ENCODE measurements at regions of chr14 and their contacts with region 1.

Region 1: GRCh38 chr14:21039585-21040369 is 2.4 kb upstream of the RNASE7 start:
- H3K4me3 ChIP-seq: no peak overlapping the region
- H3K27ac ChIP-seq: no peak overlapping the region
- H3K4me1 ChIP-seq: no peaks in the 10 kb centered on the region
- CTCF ChIP-seq: peak; percentile 67

Region 2: GRCh38 chr14:20697273-20698017 is 342.3 kb before region 1 on chr14:
- CTCF ChIA-PET with region 1: interaction called, 13 read pairs
- POLR2A ChIA-PET with region 1: no interaction called
- H3K4me3 ChIP-seq: no peak overlapping the region
- H3K27ac ChIP-seq: no peak overlapping the region
- H3K4me1 ChIP-seq: no peaks in the 10 kb centered on the region
- CTCF ChIP-seq: peak; percentile 76

Region 3: GRCh38 chr14:21063479-21063878 is 23.7 kb after region 1 on chr14:
- CTCF ChIA-PET with region 1: interaction called, 25 read pairs
- POLR2A ChIA-PET with region 1: no interaction called
- H3K4me3 ChIP-seq: no peak overlapping the region
- H3K27ac ChIP-seq: no peak overlapping the region
- H3K4me1 ChIP-seq: no peaks in the 10 kb centered on the region; the same call in 1 of the 2 replicates
- CTCF ChIP-seq: no peak

Region 4: DNA sequence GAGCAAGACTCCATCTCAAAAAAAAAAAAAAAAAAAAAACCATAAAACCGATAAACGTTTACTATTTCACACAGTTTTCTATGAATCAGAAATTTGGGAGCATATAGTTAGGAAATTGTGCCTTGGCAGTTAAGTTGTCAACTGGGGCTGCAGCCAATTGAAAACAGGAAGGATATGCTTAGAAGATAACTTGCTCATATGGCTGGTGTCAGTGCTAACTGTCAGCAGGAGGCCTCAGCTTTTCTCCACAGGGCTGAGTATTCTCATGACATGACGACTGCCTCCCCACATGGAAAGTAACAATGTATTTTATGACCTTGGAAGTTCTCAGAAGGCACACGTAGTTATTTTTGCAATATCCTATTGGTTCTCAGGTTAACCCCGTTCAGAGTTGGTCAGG is 145.7 kb after region 1 on chr14:
- CTCF ChIA-PET with region 1: no interaction called
- POLR2A ChIA-PET with region 1: no interaction called
- H3K4me3 ChIP-seq: no peak overlapping the region
- H3K27ac ChIP-seq: no peak overlapping the region
- H3K4me1 ChIP-seq: no peaks in the 10 kb centered on the region
- CTCF ChIP-seq: no peak

Region 5: DNA sequence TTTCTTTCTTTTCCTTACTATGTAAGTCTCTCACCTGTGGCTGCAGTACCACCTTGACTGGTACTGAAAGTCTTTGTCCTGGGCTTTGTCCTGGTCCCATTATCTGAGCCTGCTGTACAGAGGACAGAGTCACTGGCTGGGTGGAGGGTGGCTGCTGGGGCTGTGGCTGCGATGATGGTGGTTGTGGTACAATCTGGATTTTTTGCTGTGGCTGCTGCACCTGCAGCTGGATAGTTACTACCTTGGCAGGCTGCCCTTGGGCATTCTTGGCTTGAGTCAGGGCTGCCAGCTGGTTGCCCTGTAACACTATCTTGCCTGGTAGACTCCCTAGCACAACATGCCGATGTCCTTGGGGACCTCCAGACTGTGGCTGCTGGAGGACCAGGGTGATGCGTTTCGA is 389.2 kb after region 1 on chr14:
- CTCF ChIA-PET with region 1: no interaction called
- POLR2A ChIA-PET with region 1: no interaction called
- H3K4me3 ChIP-seq: no peak overlapping the region
- H3K27ac ChIP-seq: no peak overlapping the region
- H3K4me1 ChIP-seq: no peaks in the 10 kb centered on the region
- CTCF ChIP-seq: no peak

Measured in HEK293 (cell line).